ENCODE measurements at regions of chr3 and their contacts with region 1.

Region 1: DNA sequence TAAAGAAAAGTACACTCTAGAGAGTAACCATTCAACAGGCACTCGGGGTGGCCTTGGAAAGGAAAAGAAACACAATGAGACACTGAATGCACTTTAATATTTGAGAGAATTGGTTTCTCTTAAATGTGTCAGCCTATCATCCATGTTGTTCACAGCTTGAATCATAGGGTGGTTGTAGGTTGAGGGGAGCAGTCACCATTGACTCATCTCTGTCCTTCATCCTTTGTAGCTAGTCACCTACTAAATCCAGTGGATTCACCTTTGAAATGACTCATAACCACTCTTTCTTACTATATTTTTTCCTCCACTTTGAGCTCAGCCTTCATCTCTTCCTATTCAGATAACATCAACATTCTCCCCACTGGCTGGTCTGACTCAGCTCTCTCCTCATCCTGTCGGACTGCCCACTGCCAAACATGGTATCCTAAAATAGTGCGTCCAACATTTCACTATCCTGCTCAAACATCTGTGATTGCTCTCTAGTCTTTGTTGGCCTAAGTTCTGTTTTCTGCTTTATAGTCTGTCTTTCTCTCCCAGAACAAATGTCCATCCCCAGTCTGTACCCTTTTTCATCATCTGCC is 182.7 kb upstream of the GADL1 start:
- DNase-seq: peak; percentile 62 to 86
- H3K4me3 ChIP-seq: no peak overlapping the region
- H3K27ac ChIP-seq: peak overlapping the region; percentile 67
- H3K4me1 ChIP-seq: peaks cover 13% of the 10 kb centered on the region
- H3K27me3 ChIP-seq: no peaks in the 10 kb centered on the region
- CTCF ChIP-seq: no peak

Region 2: GRCh38 chr3:31010491-31010890 is 66.6 kb before region 1 on chr3:
- CTCF ChIA-PET with region 1: no interaction called
- POLR2A ChIA-PET with region 1: no interaction called
- intact Hi-C with region 1: loop called (anchors 10 kb)
- DNase-seq: no peak
- H3K4me3 ChIP-seq: no peak overlapping the region
- H3K27ac ChIP-seq: no peak overlapping the region
- H3K4me1 ChIP-seq: no peaks in the 10 kb centered on the region
- H3K27me3 ChIP-seq: no peaks in the 10 kb centered on the region
- CTCF ChIP-seq: no peak

Region 3: DNA sequence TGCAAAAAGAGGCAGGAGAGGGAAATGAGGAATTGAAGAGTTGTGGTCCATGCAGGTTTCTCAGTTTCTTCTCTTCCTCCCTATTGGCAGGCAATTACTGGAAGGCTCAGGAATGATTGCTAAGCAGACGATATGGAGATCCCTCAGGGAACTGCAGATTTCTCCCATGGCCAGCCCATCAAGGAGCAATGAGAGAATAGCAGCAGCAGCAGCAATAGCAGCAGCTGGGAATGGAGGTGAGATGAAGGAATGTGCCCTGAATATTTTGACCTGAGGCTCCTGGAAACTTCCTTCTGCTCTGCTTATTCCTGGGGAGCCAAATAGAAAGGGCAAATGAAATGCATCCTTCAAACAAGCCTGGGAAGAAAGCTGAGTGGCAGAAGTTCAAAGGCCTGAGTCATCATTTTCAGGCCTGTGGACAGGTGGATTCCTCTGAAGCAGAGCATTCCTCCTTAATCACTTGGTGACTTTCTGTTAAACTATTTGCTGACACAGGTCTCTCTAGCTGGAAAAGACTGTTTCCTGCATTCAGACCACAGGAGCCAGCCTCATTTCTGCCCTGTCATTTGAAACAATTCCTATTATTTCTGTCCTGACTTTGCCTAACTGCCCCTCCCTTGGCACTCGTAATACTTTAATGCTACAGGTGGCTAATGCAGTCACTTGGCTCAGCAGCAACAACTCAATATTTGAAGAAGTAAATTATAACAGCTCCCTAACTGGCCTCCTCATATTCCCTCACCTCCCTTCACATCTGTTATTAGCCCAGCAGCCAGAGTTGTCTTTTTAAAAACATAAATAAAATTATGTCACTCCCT is 35.7 kb before region 1 on chr3:
- CTCF ChIA-PET with region 1: interaction called, 3 read pairs
- POLR2A ChIA-PET with region 1: interaction called, 4 read pairs
- intact Hi-C with region 1: loop called (anchors 1 kb)
- DNase-seq: peak; percentile 77 to 96
- H3K4me3 ChIP-seq: no peak overlapping the region
- H3K27ac ChIP-seq: peak overlapping the region; percentile 51
- H3K4me1 ChIP-seq: peaks cover 14% of the 10 kb centered on the region
- H3K27me3 ChIP-seq: no peaks in the 10 kb centered on the region
- CTCF ChIP-seq: no peak

Region 4: GRCh38 chr3:31218082-31218481 is 141.0 kb after region 1 on chr3:
- CTCF ChIA-PET with region 1: no interaction called
- POLR2A ChIA-PET with region 1: interaction called, 11 read pairs
- intact Hi-C with region 1: no loop called
- DNase-seq: no peak
- H3K4me3 ChIP-seq: no peak overlapping the region
- H3K27ac ChIP-seq: no peak overlapping the region
- H3K4me1 ChIP-seq: peaks cover 3% of the 10 kb centered on the region; the same call in 1 of the 2 replicates
- H3K27me3 ChIP-seq: no peaks in the 10 kb centered on the region
- CTCF ChIP-seq: no peak

Region 5: DNA sequence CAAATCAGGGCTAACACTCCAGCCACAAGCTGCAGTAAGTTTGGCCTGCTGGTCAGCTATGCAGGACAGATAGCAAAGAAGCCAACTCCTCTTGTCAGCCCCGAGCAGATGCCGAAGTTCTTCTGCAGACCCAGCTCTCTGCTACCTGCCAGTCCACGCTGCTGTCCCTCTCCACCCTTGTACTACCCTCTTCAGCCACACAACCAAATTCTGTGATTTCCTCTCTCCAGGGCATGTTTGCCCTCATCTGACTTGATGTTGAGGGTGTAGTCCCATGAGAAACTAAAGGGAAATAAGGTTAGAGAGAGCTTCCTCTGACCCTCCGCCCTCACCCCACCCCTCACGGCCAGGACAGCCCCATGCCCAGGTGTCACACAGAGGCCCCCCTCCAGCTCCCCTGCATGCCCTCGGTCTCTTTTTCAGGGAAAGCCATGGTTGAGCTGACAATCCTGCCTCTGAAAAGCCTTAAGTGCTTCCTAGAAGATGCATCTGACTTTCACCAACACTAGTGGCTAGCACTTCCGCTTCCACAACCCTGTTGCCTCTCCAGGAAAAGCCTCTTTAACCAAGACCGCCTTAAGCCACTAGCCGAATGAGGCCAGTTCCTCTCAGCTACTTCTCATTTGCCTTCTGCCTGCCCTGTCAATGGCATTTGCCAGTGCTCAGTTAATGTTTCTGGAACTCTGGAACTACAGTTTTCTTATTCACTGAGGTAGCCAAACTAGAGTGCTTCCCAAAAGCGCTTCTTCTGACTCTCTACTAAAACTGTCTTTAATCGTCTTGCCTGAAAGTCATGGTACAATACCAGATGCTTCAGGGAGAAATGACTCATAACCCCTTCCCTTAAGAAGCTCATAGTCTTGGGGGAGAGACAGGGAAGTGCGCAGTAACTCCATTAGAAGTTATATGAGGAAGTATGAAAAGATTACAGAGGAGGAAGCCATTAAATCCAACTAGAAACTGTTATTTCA is 155.2 kb after region 1 on chr3:
- CTCF ChIA-PET with region 1: no interaction called
- POLR2A ChIA-PET with region 1: no interaction called
- intact Hi-C with region 1: no loop called
- DNase-seq: no peak
- H3K4me3 ChIP-seq: no peak overlapping the region
- H3K27ac ChIP-seq: no peak overlapping the region
- H3K4me1 ChIP-seq: no peaks in the 10 kb centered on the region
- H3K27me3 ChIP-seq: no peaks in the 10 kb centered on the region
- CTCF ChIP-seq: no peak

Region 6: DNA sequence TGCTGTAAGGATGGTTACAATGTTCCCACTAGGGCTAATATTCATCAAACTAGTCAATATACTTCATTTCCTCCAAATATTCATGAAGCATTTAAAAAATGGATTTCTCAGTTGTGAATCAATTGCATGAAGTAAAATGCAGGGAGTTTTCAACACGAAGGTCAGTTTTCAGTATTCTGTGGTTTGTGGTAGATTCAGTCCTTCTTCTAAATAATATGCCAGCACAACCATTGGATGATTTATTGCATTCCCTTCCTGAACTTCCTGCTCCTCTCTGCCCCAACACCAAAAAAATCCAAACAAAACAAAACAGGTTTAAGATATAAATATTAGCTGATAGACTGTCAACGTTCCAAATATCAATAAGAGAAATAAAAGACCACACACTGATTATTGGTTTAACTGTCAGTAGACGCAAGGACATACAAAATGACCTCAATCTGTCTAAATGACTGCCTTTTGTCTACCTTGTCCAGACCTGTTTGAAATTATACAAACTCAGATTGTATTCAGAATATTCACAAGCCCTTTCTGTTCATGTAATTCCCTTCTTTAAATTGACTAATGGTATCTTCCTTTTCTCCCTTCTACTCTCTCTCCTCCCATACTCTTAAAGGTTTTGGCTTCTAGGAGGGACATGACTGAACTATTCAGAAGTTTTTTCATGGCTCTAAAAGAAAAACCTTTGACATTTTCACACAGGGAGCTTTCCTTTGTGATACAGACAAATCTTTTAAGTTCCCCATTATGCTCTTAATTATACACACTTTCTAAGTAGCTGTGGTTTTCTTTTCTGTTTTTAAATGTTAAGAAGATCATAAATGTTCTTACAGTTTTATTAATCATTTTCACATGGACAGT is 363.0 kb after region 1 on chr3:
- CTCF ChIA-PET with region 1: no interaction called
- POLR2A ChIA-PET with region 1: interaction called, 13 read pairs
- intact Hi-C with region 1: no loop called
- DNase-seq: no peak
- H3K4me3 ChIP-seq: no peak overlapping the region
- H3K27ac ChIP-seq: no peak overlapping the region
- H3K4me1 ChIP-seq: peaks cover 12% of the 10 kb centered on the region
- H3K27me3 ChIP-seq: no peaks in the 10 kb centered on the region
- CTCF ChIP-seq: no peak

Region 7: GRCh38 chr3:31988271-31988670 is 911.2 kb after region 1 on chr3:
- CTCF ChIA-PET with region 1: no interaction called
- POLR2A ChIA-PET with region 1: no interaction called
- intact Hi-C with region 1: no loop called
- DNase-seq: no peak
- H3K4me3 ChIP-seq: no peak overlapping the region
- H3K27ac ChIP-seq: no peak overlapping the region
- H3K4me1 ChIP-seq: no peaks in the 10 kb centered on the region
- H3K27me3 ChIP-seq: no peaks in the 10 kb centered on the region
- CTCF ChIP-seq: no peak

Measured in PC-9 (cell line).